Vagina (tissue), 2 donors: ENCODE measurements at regions of chrX and their contacts with region 1.

Region 1: GRCh38 chrX:124863303-124863702 is 456.4 kb upstream of the TEX13C start:
- DNase-seq: no peak
- H3K4me3 ChIP-seq: no peak overlapping the region
- H3K27ac ChIP-seq: no peak overlapping the region
- H3K4me1 ChIP-seq: no peaks in the 10 kb centered on the region
- H3K27me3 ChIP-seq: no peaks in the 10 kb centered on the region
- CTCF ChIP-seq: no peak
- POLR2A ChIP-seq: no peak

Region 2: GRCh38 chrX:123236859-123237258 is 1626.4 kb before region 1 on chrX:
- intact Hi-C with region 1: loop called (anchors 5 kb)
- DNase-seq: no peak
- H3K4me3 ChIP-seq: no peak overlapping the region
- H3K27ac ChIP-seq: no peak overlapping the region
- H3K4me1 ChIP-seq: no peaks in the 10 kb centered on the region
- H3K27me3 ChIP-seq: no peaks in the 10 kb centered on the region
- CTCF ChIP-seq: no peak
- POLR2A ChIP-seq: no peak

Region 3: GRCh38 chrX:125404667-125405160 is 541.4 kb after region 1 on chrX:
- intact Hi-C with region 1: no loop called
- DNase-seq: no peak
- H3K4me3 ChIP-seq: no peak overlapping the region
- H3K27ac ChIP-seq: no peak overlapping the region
- H3K4me1 ChIP-seq: no peaks in the 10 kb centered on the region
- H3K27me3 ChIP-seq: no peaks in the 10 kb centered on the region
- CTCF ChIP-seq: no peak
- POLR2A ChIP-seq: no peak

Region 4: GRCh38 chrX:125420809-125421208 is 557.5 kb after region 1 on chrX:
- intact Hi-C with region 1: no loop called
- DNase-seq: no peak
- H3K4me3 ChIP-seq: no peak overlapping the region
- H3K27ac ChIP-seq: no peak overlapping the region
- H3K4me1 ChIP-seq: no peaks in the 10 kb centered on the region
- H3K27me3 ChIP-seq: no peaks in the 10 kb centered on the region
- CTCF ChIP-seq: no peak
- POLR2A ChIP-seq: no peak